Uterus (tissue), 4 donors: ENCODE measurements at regions of chr4 and their contacts with region 1.

Region 1: GRCh38 chr4:139554893-139555704 is 920 bp downstream of the SETD7 start:
- DNase-seq: peak; percentile 89 to 94
- H3K4me3 ChIP-seq: peak overlapping the region; percentile 74 to 78
- H3K27ac ChIP-seq: peak overlapping the region; percentile 98
- H3K4me1 ChIP-seq: peaks cover 0 to 15% of the 10 kb centered on the region in 2 donors
- H3K27me3 ChIP-seq: no peaks in the 10 kb centered on the region
- CTCF ChIP-seq: no peak
- POLR2A ChIP-seq: peak; percentile 85 to 87

Region 2: DNA sequence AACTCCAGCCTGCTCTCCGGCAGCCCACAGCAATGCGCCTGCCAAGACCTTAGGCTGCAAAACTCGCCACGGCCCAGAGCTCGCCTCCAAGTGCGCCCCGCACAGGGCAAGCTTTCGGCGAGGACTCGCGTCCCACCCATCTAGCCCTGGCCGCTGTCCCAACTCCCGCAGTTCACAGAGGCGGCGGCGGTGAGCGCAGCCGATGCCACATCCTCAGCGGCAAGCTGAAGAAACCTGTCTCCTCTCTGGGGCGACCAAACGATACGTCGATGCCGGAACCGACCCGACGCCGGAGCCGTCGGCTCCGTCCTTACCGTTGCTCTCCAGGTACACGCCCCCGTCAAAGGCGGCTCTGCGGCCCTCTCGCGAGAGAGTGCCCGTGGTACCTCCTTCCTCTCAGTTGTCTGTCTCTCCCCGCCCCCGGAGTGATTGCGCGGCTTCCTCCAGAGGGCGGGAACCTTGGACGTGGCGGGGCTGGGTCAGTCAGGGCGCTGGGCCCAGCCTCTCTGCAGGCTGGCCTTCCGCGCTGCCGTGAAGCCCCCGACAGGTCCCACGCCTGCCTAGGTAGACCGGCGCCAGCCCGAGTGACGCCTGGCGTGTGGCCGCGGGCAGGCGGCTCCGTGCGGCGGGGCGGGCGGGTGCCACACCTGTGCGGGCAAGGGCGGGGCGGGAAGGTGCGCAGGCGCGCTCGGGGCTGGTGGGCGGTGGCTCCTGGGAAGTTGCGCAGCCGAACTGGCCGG is 101.6 kb before region 1 on chr4:
- intact Hi-C with region 1: loop called (anchors 10 kb)
- DNase-seq: peak; percentile 97 to 99
- H3K4me3 ChIP-seq: peak overlapping the region; percentile 94 to 97
- H3K27ac ChIP-seq: peak overlapping the region; percentile 98 to 99
- H3K4me1 ChIP-seq: no peaks in the 10 kb centered on the region
- H3K27me3 ChIP-seq: no peaks in the 10 kb centered on the region
- CTCF ChIP-seq: peak in 1 of 4 experiments; percentile 7
- POLR2A ChIP-seq: peak; percentile 85 to 88